Heart left ventricle (tissue), 16 donors: ENCODE measurements at regions of chr19 and their contacts with region 1.

Region 1: GRCh38 chr19:13880059-13881043 is 3.4 kb downstream of the NANOS3 start:
- DNase-seq: peak; percentile 97 to 99 (median 97)
- ATAC-seq: peak; percentile 94 to 98 (median 96)
- H3K4me3 ChIP-seq: peak overlapping the region in 10 of 12 donors; percentile 13 to 47 (median 34)
- H3K27ac ChIP-seq: peak overlapping the region in 11 of 12 donors; percentile 29 to 83 (median 73)
- H3K4me1 ChIP-seq: peaks cover 0 to 35% (median 24%) of the 10 kb centered on the region in 12 donors
- H3K27me3 ChIP-seq: no peaks in the 10 kb centered on the region
- CTCF ChIP-seq: peak; percentile 99 to 100 (median 99)
- POLR2A ChIP-seq: peak in 1 of 2 donors; percentile 58

Region 2: GRCh38 chr19:13597640-13598039 is 282.7 kb before region 1 on chr19:
- intact Hi-C with region 1: loop called in 2 of 10 experiments (anchors 5 kb)
- DNase-seq: peak in 4 of 5 donors; percentile 26 to 54 (median 42)
- ATAC-seq: peak; percentile 75 to 83 (median 78)
- H3K4me3 ChIP-seq: no peak overlapping the region
- H3K27ac ChIP-seq: no peak overlapping the region
- H3K4me1 ChIP-seq: no peaks in the 10 kb centered on the region
- H3K27me3 ChIP-seq: peaks cover 0 to 52% (median 0%) of the 10 kb centered on the region in 9 donors
- CTCF ChIP-seq: peak; percentile 34 to 73 (median 64)
- POLR2A ChIP-seq: no peak

Region 3: DNA sequence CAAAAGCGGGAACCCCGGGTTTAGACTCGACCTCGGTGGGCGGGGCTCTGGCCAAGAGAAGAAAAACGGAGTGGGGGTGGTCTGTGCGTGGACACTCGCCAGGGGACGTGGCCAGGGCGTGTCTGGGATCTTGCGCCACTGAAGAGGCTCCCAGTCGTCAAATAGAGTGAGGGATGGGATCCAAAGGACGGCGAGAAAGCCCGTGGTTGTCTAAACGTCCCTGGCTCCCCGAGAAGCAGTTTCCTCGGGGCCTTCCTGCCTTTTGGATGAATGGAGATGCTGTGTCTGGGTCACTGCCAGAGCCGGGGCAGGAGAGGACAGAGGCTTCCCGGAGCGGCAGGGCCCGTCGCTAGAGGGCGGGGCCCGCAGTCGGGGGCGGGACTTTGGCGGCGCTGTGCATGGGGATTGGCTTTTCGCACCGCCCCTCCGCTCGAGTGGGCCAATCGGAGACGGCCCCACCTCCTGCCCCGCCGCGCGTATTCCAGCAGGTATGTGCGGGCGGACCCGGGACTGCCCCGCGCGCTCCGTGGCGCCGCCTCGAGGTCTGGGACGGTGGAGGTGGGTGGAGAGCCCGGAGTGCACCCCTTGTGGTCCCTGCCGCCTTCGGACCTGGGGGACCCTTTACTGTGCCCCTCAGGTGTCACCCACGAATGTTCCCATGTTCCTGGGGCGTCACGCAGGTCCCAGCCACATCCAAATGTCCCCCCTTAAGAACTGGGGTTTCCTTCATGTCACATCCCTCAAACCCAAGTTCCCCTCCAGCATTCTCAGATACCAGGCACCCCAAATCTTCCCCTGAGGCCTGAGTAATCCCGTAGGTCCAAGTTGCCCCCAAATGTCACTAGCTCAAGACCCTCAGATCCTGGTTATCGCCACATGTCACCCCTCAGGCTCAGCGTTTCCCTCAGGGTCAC is 46.8 kb before region 1 on chr19:
- intact Hi-C with region 1: no loop called
- DNase-seq: peak; percentile 94 to 97 (median 97)
- ATAC-seq: peak; percentile 83 to 88 (median 84)
- H3K4me3 ChIP-seq: peak overlapping the region in 7 of 12 donors; percentile 3 to 43 (median 24)
- H3K27ac ChIP-seq: peak overlapping the region; percentile 54 to 100 (median 88)
- H3K4me1 ChIP-seq: peaks cover 25 to 65% (median 58%) of the 10 kb centered on the region in 12 donors
- H3K27me3 ChIP-seq: no peaks in the 10 kb centered on the region
- CTCF ChIP-seq: peak in 11 of 12 donors; percentile 9 to 57 (median 44)
- POLR2A ChIP-seq: peak in 1 of 2 donors; percentile 63

Region 4: DNA sequence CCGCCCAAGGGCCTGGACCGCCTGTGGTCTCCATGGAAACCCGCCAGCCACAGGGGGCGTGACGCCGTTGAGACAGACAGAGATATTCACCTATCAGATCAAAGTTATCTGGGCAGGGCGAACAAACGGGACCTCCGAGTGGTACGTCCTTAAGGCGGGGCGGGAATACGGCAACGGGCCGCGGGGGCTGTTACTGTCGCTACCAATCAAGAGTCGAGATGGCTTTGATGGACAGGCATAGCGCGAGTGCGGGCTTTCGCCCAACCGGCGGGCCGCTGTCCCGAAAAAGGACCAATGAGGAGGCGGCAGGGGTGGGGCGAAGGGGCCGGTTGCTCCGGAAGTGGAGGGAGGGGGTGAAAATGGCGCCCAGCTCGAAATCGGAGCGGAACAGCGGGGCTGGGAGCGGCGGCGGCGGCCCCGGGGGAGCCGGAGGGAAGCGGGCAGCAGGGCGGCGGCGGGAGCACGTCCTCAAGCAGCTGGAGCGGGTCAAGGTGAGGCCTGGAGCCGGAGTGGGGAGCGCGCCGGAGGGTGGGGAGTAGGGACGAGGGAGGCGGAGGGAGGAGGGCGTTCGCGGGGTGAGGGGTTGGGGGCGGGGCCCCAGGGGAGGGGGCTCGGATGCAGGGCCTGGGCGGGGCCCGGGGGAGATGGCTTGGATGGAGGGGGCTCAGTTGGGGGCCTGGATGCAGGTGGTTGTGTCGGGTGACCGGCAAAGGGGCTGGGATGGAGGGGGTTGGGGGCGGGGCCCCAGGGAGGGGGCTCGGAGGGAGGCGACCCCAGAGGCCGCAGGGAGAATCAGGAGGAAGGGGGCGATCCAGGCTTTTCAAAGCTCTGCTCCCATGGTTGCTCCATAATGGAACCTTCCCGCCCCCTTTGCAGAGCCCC is 72.0 kb after region 1 on chr19 and contains the start of gene DCAF15:
- intact Hi-C with region 1: loop called in 4 of 10 experiments (anchors 1 to 5 kb)
- DNase-seq: peak; percentile 99 to 100 (median 100)
- ATAC-seq: peak; percentile 99
- H3K4me3 ChIP-seq: peak within 1 kb of the TSS; percentile 55 to 92 (median 76)
- H3K27ac ChIP-seq: peak within 1 kb of the TSS; percentile 65 to 90 (median 81)
- H3K4me1 ChIP-seq: peaks cover 5 to 31% (median 15%) of the 10 kb centered on the region in 12 donors
- H3K27me3 ChIP-seq: no peaks in the 10 kb centered on the region
- CTCF ChIP-seq: no peak
- POLR2A ChIP-seq: peak in 1 of 2 donors; percentile 54
- total RNA-seq, gene DCAF15: 8.4 to 21.4 (median 17.6) TPM

Region 5: GRCh38 chr19:14048443-14049153 is 168.2 kb after region 1 on chr19:
- intact Hi-C with region 1: loop called in 8 of 10 experiments (anchors 1 to 10 kb)
- DNase-seq: peak in 3 of 5 donors; percentile 31 to 76 (median 42)
- ATAC-seq: peak in 3 of 4 donors; percentile 59 to 68 (median 66)
- H3K4me3 ChIP-seq: no peak overlapping the region
- H3K27ac ChIP-seq: no peak overlapping the region
- H3K4me1 ChIP-seq: no peaks in the 10 kb centered on the region
- H3K27me3 ChIP-seq: no peaks in the 10 kb centered on the region
- CTCF ChIP-seq: peak; percentile 70 to 91 (median 82)
- POLR2A ChIP-seq: no peak

Region 6: GRCh38 chr19:14059093-14059480 is 178.7 kb after region 1 on chr19:
- intact Hi-C with region 1: loop called in 2 of 10 experiments (anchors 5 to 10 kb)
- DNase-seq: no peak
- ATAC-seq: no peak
- H3K4me3 ChIP-seq: no peak overlapping the region
- H3K27ac ChIP-seq: no peak overlapping the region
- H3K4me1 ChIP-seq: peaks cover 0 to 18% (median 2%) of the 10 kb centered on the region in 12 donors
- H3K27me3 ChIP-seq: peaks cover 5 to 34% (median 28%) of the 10 kb centered on the region in 9 donors
- CTCF ChIP-seq: peak; percentile 41 to 68 (median 57)
- POLR2A ChIP-seq: no peak

Region 7: DNA sequence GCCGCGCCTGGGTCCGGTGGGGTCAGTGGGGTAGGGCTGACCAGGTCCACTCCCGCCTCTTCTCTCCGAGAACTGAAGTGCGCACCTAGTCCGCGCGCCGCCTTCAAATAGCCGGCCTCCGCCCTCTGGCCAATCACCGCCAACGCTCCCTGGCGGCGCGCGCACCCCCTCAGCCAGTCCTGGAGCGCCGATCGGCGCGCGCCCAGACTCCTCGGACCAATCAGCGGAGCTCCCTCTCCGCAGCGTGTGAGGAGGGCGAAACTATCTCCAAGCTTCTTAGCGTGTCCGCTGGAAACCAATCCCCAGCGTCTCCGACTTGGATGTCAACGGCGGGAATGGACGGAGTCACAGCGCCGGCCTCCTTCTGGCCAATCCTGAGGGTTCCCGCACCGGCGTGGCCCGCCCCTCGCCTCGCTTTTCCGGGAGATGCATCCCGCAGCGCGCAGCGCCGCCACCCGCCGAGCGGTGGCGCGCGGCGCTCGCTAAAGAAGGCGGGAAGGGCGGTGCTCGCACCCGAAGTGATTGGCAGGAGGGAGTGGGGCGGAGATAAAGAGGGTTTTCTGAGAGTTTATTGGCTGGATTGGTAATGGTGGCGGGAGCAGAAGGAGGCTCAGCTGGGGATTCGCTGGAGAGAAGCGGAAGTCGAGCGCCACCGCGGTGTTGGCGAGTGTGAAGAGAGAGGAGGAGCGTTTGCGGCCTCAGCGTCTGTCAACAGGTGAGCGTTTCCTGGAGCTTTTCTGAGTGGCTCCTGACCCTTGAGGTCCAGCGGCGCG is 256.3 kb after region 1 on chr19 and contains the start of gene ASF1B:
- intact Hi-C with region 1: loop called in 1 of 10 experiments (anchors 5 kb)
- DNase-seq: peak; percentile 99 to 100 (median 99)
- ATAC-seq: peak; percentile 92 to 96 (median 94)
- H3K4me3 ChIP-seq: peak within 1 kb of the TSS; percentile 43 to 97 (median 78)
- H3K27ac ChIP-seq: peak within 1 kb of the TSS; percentile 70 to 97 (median 93)
- H3K4me1 ChIP-seq: peaks cover 0 to 47% (median 28%) of the 10 kb centered on the region in 12 donors
- H3K27me3 ChIP-seq: no peaks in the 10 kb centered on the region
- CTCF ChIP-seq: peak; percentile 75 to 100 (median 88)
- POLR2A ChIP-seq: peak in 1 of 2 donors; percentile 80
- total RNA-seq, gene ASF1B: 0.42 to 7.0 (median 0.91) TPM

Region 8: DNA sequence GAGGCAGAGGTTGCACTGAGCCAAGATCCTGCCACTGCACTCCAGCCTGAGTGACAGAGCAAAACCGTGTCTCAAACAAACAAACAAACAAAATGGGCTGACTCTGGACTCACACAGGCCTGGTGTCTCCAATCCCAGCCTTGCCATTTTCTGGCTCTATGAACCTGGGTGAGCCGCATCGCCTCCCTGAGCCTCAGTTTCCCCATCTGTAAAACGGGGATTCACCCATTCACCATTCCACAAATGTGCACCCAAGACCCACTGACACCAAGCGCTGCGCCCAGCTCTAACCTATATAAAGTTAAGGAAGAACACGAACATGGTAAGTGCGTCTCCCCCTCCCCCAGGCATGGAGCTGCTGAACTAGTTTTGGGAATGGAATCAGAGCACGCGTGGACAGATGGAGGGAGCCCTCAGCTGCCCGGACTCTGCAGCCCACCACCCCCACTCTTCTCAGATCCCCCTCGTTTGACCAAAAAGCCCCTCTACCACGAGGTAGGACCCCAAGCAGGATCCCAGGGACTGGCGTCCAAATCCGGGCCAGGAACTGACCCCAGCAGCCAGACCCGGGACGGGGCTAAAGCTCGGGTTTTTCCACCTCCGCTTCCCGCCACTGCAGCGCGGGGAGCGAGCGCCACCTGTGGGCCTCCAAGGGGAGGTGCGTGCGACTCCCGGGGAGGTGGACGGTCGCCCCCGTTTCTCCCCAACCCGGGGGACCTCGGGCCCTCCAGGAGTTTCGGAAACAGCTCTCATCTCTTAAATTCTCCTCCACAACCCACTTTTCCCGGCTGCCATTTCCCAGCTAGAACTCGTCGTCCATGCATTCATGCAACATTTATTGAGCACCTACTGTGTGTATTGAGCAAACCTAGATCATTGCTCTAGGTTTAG is 467.9 kb after region 1 on chr19:
- intact Hi-C with region 1: loop called in 4 of 10 experiments (anchors 5 to 10 kb)
- DNase-seq: peak; percentile 58 to 86 (median 72)
- ATAC-seq: peak; percentile 65 to 84 (median 82)
- H3K4me3 ChIP-seq: peak overlapping the region in 8 of 12 donors; percentile 12 to 41 (median 28)
- H3K27ac ChIP-seq: no peak overlapping the region
- H3K4me1 ChIP-seq: peaks cover 0 to 13% (median 2%) of the 10 kb centered on the region in 12 donors
- H3K27me3 ChIP-seq: no peaks in the 10 kb centered on the region
- CTCF ChIP-seq: peak; percentile 87 to 99 (median 96)
- POLR2A ChIP-seq: no peak